Activated naive CD4-positive, alpha-beta T cell treated with anti-CD3 and anti-CD28 coated beads, Interleukin-2, amount 10 ng/mL, durations not matched to agents 7 days and 5 days (primary cell): ENCODE measurements at regions of chr3 and their contacts with region 1.

Region 1: GRCh38 chr3:15120986-15121385 is 22.0 kb upstream of the RBSN start:
- DNase-seq: no peak
- H3K4me3 Mint-ChIP-seq: no peak overlapping the region
- H3K27ac Mint-ChIP-seq: no peak overlapping the region
- H3K4me1 Mint-ChIP-seq: peaks cover 11% of the 10 kb centered on the region
- H3K27me3 Mint-ChIP-seq: peaks cover 26% of the 10 kb centered on the region

Region 2: GRCh38 chr3:15092686-15093085 is 28.3 kb before region 1 on chr3:
- CTCF ChIA-PET with region 1: no interaction called
- DNase-seq: no peak
- H3K4me3 Mint-ChIP-seq: no peak overlapping the region
- H3K27ac Mint-ChIP-seq: no peak overlapping the region
- H3K4me1 Mint-ChIP-seq: peaks cover 22% of the 10 kb centered on the region
- H3K27me3 Mint-ChIP-seq: peaks cover under 1% of the 10 kb centered on the region

Region 3: DNA sequence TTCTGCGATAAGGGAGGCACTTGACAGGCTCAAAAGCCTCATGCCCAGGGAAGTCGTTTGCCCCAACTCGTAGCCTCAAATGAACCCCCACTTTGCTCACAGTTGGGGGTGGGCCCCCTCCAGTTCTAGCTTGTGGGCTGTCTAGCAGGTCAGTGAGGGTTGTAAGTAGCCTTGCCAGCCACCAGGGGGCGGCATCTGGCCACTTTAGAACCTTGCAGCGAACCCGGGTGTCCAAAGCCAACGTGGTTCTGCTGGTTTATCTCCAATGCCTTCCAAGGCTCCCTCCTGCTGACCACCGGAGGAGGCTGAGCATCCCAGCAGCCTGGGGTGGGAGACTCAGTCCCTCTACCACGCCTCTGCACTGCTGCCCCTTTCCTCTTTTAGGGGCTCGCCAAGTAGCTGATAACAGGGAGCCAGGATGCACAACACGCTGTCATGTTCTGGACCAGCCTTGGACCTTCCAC is 12.9 kb before region 1 on chr3:
- CTCF ChIA-PET with region 1: interaction called, 68 read pairs
- DNase-seq: peak; percentile 84
- H3K4me3 Mint-ChIP-seq: no peak overlapping the region
- H3K27ac Mint-ChIP-seq: no peak overlapping the region
- H3K4me1 Mint-ChIP-seq: peaks cover 4% of the 10 kb centered on the region
- H3K27me3 Mint-ChIP-seq: peaks cover 33% of the 10 kb centered on the region

Region 4: GRCh38 chr3:15199493-15200105 is 78.6 kb after region 1 on chr3:
- CTCF ChIA-PET with region 1: interaction called, 11 read pairs
- DNase-seq: no peak
- H3K4me3 Mint-ChIP-seq: no peak overlapping the region
- H3K27ac Mint-ChIP-seq: no peak overlapping the region
- H3K4me1 Mint-ChIP-seq: peaks cover 3% of the 10 kb centered on the region
- H3K27me3 Mint-ChIP-seq: peaks cover 23% of the 10 kb centered on the region